ENCODE measurements at regions of chr6 and their contacts with region 1.

Region 1: DNA sequence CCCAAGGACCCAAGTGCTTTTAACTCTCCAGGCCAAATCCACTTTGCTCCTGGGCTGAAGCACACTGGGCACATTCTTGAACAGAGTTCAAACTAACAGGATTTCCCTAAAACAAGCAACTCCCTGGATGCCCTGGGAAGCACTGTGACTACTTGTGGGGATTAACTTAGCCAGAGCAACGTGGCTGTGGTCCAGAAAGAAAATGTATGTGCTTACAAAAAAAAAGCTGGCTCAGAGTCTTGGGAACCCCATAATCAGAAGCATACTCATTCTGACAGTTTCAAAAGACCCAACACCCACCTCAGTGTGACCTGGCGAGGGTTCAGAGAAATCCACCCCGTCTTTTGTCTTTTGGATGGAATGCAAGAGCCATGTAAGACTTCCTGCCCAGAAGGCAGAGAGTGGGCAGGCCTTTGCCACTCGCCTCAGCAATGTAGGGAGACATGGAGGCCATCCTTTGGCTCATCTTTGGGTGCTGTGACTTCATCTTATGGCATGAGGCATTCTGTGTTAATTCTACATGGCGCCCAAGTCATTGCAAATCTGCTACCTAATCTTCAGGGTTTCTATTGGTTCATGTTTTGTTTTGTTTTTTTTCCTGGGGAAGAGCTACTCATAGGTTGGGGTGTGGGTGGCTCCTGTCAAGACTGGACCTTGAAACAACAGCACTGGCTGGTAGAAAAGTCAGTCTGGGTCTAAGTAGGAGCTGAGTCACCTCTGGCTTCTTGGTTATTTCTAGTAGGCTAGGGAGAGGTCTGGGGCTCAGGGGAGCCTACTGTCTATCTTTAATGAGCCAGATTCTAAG is 248.6 kb upstream of the SUPT3H start:
- DNase-seq: no peak
- H3K4me3 Mint-ChIP-seq: no peak overlapping the region
- H3K27ac Mint-ChIP-seq: peak overlapping the region; percentile 86
- H3K4me1 Mint-ChIP-seq: peaks cover 61% of the 10 kb centered on the region
- H3K27me3 Mint-ChIP-seq: no peaks in the 10 kb centered on the region

Region 2: DNA sequence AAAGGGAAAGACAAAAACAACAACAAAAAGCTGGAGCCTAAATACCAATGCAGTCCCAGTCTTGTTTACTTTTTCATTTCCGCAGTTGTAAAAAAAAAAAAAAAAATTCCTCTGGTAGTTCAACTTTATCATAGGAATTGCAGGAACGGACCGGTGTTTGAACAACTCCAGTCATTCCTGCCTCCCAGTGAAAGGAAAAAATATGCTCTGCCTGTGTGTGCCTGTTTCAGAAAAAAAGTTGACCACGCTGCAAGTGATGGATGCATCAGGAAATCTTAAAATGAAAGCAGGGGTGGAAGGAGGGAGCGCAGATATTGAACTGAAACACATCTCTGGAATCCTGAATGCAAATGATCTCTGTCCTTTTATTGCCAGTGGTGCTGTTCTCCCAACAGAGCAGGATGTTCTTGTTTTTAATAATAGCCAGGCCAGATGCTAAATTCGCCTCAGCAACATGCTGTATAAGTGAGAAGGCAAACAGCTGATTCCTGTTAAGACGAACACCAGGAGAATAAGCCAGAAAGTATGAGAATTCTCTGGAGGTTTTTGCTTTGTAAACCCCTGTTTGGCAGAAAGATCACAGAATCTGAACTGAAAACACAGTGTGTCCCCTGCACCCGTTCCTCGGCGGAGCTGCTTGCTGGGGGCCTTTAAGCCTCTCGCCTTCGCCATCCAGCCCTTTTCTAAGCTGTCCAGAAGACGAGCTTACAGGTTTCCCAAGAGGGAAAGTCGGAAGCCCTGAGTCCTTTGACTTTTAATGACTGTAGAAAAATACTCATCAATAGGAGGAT is 70.1 kb before region 1 on chr6:
- intact Hi-C with region 1: loop called (anchors 2 kb)
- DNase-seq: no peak
- H3K4me3 Mint-ChIP-seq: no peak overlapping the region
- H3K27ac Mint-ChIP-seq: no peak overlapping the region
- H3K4me1 Mint-ChIP-seq: peaks cover 69% of the 10 kb centered on the region
- H3K27me3 Mint-ChIP-seq: no peaks in the 10 kb centered on the region

Region 3: GRCh38 chr6:45590225-45590624 is 36.1 kb before region 1 on chr6:
- intact Hi-C with region 1: loop called (anchors 1 kb)
- DNase-seq: no peak
- H3K4me3 Mint-ChIP-seq: no peak overlapping the region
- H3K27ac Mint-ChIP-seq: peak overlapping the region; percentile 86
- H3K4me1 Mint-ChIP-seq: peaks cover 86% of the 10 kb centered on the region
- H3K27me3 Mint-ChIP-seq: no peaks in the 10 kb centered on the region

Region 4: GRCh38 chr6:45595010-45595851 is 31.1 kb before region 1 on chr6:
- intact Hi-C with region 1: loop called (anchors 2 kb)
- DNase-seq: no peak
- H3K4me3 Mint-ChIP-seq: peak overlapping the region; percentile 60
- H3K27ac Mint-ChIP-seq: peak overlapping the region; percentile 88
- H3K4me1 Mint-ChIP-seq: peaks cover 65% of the 10 kb centered on the region
- H3K27me3 Mint-ChIP-seq: no peaks in the 10 kb centered on the region

Region 5: DNA sequence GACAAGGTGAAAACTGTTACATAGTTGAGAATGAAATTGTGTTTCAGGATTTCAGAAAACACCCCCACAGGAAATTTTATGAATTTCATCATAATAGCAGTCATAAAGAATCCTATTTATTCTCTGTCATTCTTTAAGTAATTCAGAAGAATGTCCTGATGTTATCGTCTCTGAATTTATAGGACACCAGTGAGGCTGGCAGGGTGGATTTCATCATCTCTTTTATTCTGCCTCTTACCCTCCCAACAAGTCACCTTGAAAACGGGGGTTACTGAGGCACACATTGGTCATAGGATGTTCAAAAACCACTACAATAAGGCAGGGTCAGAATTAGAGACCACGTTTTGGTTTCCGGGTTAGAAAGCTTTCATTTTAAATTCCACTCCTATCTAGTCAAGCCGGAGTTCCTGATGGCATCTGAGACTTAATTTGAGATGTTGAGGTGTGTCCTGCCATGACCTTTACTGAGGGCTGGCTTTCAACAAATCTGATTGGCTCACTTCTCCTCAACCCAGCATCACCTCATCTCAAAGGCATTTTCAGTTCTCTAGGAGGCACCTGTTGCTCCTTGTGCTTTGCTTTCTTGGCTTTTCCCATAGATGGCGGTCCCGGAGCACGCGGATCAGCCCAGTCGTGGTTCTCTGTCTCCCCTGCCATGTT is 17.9 kb before region 1 on chr6:
- intact Hi-C with region 1: loop called (anchors 2 kb)
- DNase-seq: no peak
- H3K4me3 Mint-ChIP-seq: no peak overlapping the region
- H3K27ac Mint-ChIP-seq: peak overlapping the region; percentile 78
- H3K4me1 Mint-ChIP-seq: peaks cover 48% of the 10 kb centered on the region
- H3K27me3 Mint-ChIP-seq: no peaks in the 10 kb centered on the region

Region 6: DNA sequence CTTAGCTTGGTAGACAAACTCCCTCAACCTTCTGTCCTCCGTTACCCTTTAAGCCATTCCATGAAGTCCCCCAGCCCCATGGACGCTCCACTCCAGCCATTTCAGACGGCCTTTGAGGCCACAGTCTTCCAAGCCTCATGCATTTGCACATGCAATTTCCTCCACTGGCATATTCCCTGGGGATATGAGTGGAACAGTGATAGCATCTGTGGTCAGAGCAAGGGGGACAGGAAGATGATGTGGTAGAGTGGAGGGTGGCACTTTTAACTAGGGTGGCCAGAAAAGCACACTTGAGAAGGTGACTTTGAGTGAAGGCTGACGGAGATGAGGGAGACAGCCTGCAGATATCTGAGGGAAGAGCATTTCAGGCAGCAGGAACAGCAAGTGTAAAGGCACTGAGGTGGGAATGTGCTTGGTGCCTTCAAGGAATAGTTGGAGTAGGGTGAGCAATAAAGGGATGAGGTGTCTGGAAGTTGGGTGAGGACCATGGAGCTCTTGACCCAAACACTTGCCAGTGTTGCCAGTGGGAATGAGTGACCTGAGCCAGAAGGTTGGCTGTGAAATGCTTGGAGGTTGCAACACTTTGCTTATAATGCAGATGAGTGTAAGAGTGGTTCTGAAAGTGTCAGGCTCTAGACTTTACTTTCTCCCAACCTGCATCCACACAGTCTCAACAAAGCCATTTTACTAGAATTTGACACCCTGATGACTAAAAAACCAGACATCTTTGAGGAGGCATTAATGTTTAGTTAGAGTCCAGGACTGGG is 27.0 kb after region 1 on chr6:
- intact Hi-C with region 1: no loop called
- DNase-seq: no peak
- H3K4me3 Mint-ChIP-seq: no peak overlapping the region
- H3K27ac Mint-ChIP-seq: no peak overlapping the region
- H3K4me1 Mint-ChIP-seq: peaks cover 32% of the 10 kb centered on the region
- H3K27me3 Mint-ChIP-seq: no peaks in the 10 kb centered on the region

Region 7: GRCh38 chr6:45663551-45664221 is 37.4 kb after region 1 on chr6:
- intact Hi-C with region 1: loop called (anchors 1 kb)
- DNase-seq: peak; percentile 27
- H3K4me3 Mint-ChIP-seq: peak overlapping the region; percentile 43
- H3K27ac Mint-ChIP-seq: peak overlapping the region; percentile 56
- H3K4me1 Mint-ChIP-seq: peaks cover 70% of the 10 kb centered on the region
- H3K27me3 Mint-ChIP-seq: peaks cover 4% of the 10 kb centered on the region

Region 8: GRCh38 chr6:45830441-45831139 is 204.3 kb after region 1 on chr6:
- intact Hi-C with region 1: loop called (anchors 5 kb)
- DNase-seq: peak; percentile 48
- H3K4me3 Mint-ChIP-seq: peak overlapping the region; percentile 79
- H3K27ac Mint-ChIP-seq: peak overlapping the region; percentile 94
- H3K4me1 Mint-ChIP-seq: peaks cover 61% of the 10 kb centered on the region
- H3K27me3 Mint-ChIP-seq: no peaks in the 10 kb centered on the region